Activated naive CD4-positive, alpha-beta T cell treated with anti-CD3 and anti-CD28 coated beads for 36 hours (primary cell): ENCODE measurements at regions of chr13 and their contacts with region 1.

Region 1: GRCh38 chr13:73765651-73766384 is 368.4 kb downstream of the KLF12 start:
- DNase-seq: peak; percentile 95
- H3K4me3 Mint-ChIP-seq: peak overlapping the region; percentile 70
- H3K27ac Mint-ChIP-seq: peak overlapping the region; percentile 92
- H3K4me1 Mint-ChIP-seq: peaks cover 64% of the 10 kb centered on the region
- H3K27me3 Mint-ChIP-seq: no peaks in the 10 kb centered on the region

Region 2: GRCh38 chr13:73722120-73722519 is 43.7 kb before region 1 on chr13:
- CTCF ChIA-PET with region 1: interaction called, 8 read pairs
- intact Hi-C with region 1: loop called (anchors 1 kb)
- DNase-seq: peak; percentile 35
- H3K4me3 Mint-ChIP-seq: no peak overlapping the region
- H3K27ac Mint-ChIP-seq: no peak overlapping the region
- H3K4me1 Mint-ChIP-seq: peaks cover 38% of the 10 kb centered on the region
- H3K27me3 Mint-ChIP-seq: no peaks in the 10 kb centered on the region

Region 3: DNA sequence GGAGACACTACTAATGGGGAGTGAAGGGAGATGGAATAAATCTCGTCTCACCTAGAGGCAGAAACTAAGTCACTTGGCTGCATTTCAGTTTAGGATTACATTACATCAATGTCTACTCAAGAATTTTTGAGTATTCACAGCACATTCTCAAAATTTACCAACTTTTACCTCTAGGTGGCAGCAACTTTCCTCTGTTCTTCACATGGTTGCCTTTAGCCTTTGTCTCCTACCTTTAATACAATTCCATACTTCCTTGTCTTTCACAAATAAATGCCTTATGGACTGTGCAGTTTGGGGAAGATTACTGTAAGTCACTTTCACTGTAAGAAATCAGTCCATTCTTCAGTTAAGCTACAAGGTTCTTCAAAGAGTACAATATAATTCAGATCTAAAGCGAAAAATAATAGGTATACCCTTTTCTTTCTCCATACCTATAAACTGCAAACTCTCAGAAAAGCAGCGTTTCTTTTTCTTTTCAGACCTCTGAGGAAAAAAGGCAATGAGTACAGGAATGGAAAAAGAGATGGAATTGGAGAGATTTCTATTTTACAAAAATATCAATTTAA is 11.0 kb before region 1 on chr13:
- CTCF ChIA-PET with region 1: interaction called, 37 read pairs
- intact Hi-C with region 1: loop called (anchors 1 kb)
- DNase-seq: peak; percentile 20
- H3K4me3 Mint-ChIP-seq: no peak overlapping the region
- H3K27ac Mint-ChIP-seq: no peak overlapping the region
- H3K4me1 Mint-ChIP-seq: peaks cover 33% of the 10 kb centered on the region
- H3K27me3 Mint-ChIP-seq: no peaks in the 10 kb centered on the region

Region 4: DNA sequence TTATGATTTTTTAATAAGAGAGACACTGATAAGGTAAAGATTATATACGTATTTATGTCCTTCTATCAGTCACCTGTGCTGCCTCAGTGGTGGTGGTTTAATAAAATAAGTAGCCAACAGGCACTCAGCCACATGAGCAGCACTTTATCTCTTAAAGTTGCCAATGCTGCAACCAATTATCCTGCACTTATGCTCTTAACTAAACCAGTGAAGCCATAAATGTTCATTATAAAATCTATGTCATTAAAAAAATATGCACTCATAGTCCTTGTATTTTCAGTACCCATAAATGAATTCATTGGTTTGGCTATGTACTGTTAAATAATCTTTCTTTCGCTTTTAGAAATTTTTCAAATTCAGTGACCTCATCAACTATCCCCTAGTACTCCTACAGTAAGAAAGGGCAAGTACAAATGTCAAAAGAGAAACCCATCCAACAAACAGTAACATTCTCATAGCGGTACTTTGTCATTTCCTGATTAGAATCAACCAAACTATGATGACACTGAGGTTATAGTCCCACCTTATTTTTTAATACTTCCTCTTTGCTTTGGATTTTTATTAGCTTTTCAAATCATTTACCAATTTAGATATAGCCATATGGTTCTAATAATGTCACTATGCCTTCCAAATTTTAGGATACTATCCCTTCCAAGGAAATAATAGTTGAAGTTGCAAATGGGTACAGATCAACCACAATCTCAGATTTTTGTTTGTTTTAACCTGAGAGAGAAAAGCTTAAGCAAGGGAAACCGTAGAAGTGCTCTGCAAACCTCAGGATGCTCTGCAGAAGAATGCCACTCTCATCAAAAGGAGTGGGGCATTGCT is 177.5 kb after region 1 on chr13:
- CTCF ChIA-PET with region 1: no interaction called
- intact Hi-C with region 1: loop called (anchors 2 kb)
- DNase-seq: no peak
- H3K4me3 Mint-ChIP-seq: peak overlapping the region; percentile 33
- H3K27ac Mint-ChIP-seq: peak overlapping the region; percentile 74
- H3K4me1 Mint-ChIP-seq: peaks cover 74% of the 10 kb centered on the region
- H3K27me3 Mint-ChIP-seq: no peaks in the 10 kb centered on the region